IMR-90 (cell line): ENCODE measurements at regions of chr1 and their contacts with region 1.

Region 1: DNA sequence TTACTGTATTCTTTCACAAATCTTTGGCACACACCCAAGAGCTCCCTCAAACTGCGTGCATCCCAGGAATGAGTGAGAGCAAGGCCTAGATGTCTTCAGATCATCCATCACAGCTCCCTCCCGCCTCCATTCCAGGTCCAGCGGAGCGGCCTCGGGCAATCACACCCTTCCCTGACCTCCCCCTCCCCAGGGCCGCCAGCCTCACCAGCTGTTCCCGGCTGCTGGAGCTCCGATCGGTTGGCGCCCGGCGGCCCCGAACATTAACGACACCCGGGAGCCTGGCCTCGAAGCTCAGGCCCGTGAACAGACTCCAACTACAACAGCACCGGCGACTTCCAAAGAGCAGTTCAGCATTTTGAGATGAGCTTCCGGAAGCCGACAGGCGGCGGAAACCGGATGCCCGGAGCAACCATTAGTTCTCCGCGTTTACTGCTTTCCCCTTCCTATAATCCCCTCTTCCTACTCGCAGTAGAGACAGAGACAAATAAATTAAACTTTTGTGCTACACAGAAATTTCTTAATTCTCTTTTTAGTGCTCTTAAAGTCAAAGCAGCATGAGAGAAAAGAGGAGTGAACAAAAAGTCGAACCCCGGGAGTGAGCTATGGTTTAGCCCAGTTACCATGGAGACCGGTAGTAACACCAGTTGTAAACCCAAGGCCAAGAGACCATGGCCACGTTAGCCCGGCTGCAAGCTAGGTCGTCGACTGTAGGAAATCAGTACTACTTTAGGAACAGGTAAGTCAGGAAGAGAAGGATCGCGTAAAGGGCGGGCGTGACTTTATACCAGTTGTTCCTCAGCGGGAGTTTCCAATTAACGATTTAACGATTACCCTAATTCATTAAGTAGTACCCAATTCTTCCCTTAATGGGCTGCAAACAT is at the starts of genes GPATCH2 and SPATA17:
- DNase-seq: peak; percentile 90
- ATAC-seq: peak; percentile 95
- H3K4me3 ChIP-seq: peak within 1 kb of the TSS; percentile 86
- H3K27ac ChIP-seq: peak within 1 kb of the TSS; percentile 93
- H3K4me1 ChIP-seq: no peaks in the 10 kb centered on the region; the same call in 1 of the 2 replicates
- H3K27me3 ChIP-seq: no peaks in the 10 kb centered on the region
- CTCF ChIP-seq: peak; percentile 36
- POLR2A ChIP-seq: peak; percentile 92
- RAD21 ChIP-seq: no peak
- total RNA-seq, gene GPATCH2: 11.8 and 22.8 TPM in 2 replicates
- total RNA-seq, gene SPATA17: 0.18 and 0.28 TPM in 2 replicates

Region 2: DNA sequence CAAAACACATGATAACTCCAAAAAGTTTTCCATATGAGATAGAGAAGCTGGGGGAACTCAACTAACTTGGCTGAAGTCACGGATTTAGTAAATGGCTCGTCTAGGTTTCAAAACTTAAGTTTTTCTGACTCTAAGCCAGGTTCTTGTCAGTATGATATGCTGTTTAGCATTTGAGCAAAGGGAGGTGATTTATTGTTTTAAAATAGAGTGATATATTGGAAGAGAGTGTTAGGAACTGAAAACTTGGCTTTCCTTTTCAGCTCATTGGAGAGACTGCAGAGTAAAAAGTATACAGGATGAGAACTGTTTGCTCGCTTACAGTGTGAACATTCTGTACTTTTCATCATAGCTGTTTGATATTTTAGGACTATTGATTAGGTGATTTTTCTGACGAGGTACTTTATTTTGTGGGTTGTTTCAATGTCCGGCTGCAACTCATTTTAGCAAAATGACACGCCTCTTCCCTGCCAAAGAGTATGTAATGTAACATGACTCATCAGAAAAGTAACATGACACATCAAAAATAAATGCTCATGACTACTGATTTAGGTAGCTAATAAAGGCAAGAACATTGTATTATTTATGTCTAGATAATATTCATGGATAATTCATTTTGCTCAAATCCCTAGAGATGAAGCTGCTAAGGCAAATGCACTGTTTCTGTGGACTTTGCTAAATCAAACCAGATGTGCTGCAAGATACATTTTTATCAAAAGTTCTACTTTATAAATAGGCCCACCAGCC is 355.1 kb before region 1 on chr1:
- CTCF ChIA-PET with region 1: no interaction called
- POLR2A ChIA-PET with region 1: no interaction called
- dilution Hi-C with region 1: no loop called
- in situ Hi-C with region 1: no loop called
- intact Hi-C with region 1: loop called (anchors 10 kb)
- DNase-seq: peak; percentile 88
- ATAC-seq: peak; percentile 50
- H3K4me3 ChIP-seq: no peak overlapping the region
- H3K27ac ChIP-seq: no peak overlapping the region
- H3K4me1 ChIP-seq: peaks cover 6% of the 10 kb centered on the region
- H3K27me3 ChIP-seq: no peaks in the 10 kb centered on the region
- CTCF ChIP-seq: no peak
- POLR2A ChIP-seq: no peak
- RAD21 ChIP-seq: no peak

Region 3: DNA sequence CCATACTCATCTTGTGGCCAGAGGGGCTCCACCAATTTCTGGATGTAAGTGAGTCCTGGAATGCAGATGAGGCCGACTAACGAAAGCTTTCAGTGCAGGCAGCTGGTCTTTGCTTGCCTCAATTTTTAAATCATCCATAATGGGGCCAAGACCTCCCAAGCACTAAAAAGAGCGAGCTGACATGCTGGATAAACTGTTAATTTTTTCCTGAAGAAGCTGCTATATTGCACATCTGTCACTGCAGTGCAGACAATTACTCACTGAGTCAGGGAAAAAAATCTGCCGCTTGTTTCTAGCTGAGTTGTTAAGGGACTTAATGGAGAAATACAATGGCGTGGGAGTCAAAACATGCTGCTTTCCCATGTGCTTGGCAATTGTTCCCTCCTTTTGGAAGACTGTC is 205.5 kb before region 1 on chr1:
- CTCF ChIA-PET with region 1: no interaction called
- POLR2A ChIA-PET with region 1: no interaction called
- dilution Hi-C with region 1: no loop called
- in situ Hi-C with region 1: no loop called
- intact Hi-C with region 1: loop called (anchors 5 kb)
- DNase-seq: no peak
- ATAC-seq: no peak
- H3K4me3 ChIP-seq: no peak overlapping the region
- H3K27ac ChIP-seq: no peak overlapping the region
- H3K4me1 ChIP-seq: no peaks in the 10 kb centered on the region
- H3K27me3 ChIP-seq: no peaks in the 10 kb centered on the region
- CTCF ChIP-seq: no peak
- POLR2A ChIP-seq: no peak
- RAD21 ChIP-seq: no peak

Region 4: GRCh38 chr1:217569021-217569420 is 61.9 kb before region 1 on chr1:
- CTCF ChIA-PET with region 1: no interaction called
- POLR2A ChIA-PET with region 1: no interaction called
- dilution Hi-C with region 1: no loop called
- in situ Hi-C with region 1: no loop called
- intact Hi-C with region 1: no loop called
- DNase-seq: no peak
- ATAC-seq: no peak
- H3K4me3 ChIP-seq: no peak overlapping the region
- H3K27ac ChIP-seq: no peak overlapping the region
- H3K4me1 ChIP-seq: no peaks in the 10 kb centered on the region
- H3K27me3 ChIP-seq: no peaks in the 10 kb centered on the region
- CTCF ChIP-seq: no peak
- POLR2A ChIP-seq: no peak
- RAD21 ChIP-seq: no peak